CD8-positive, alpha-beta T cell (primary cell): ENCODE measurements at regions of chr10 and their contacts with region 1.

Region 1: GRCh38 chr10:29496341-29497162 is 138.2 kb downstream of the SVIL start:
- DNase-seq: peak; percentile 21 to 73 (median 45)
- ATAC-seq: no peak
- H3K4me3 ChIP-seq: no peak overlapping the region
- H3K4me3 Mint-ChIP-seq: no peak overlapping the region
- H3K27ac ChIP-seq: no peak overlapping the region
- H3K27ac Mint-ChIP-seq: no peak overlapping the region
- H3K4me1 ChIP-seq: no peaks in the 10 kb centered on the region
- H3K4me1 Mint-ChIP-seq: peaks cover 2% of the 10 kb centered on the region
- H3K27me3 ChIP-seq: no peaks in the 10 kb centered on the region
- H3K27me3 Mint-ChIP-seq: no peaks in the 10 kb centered on the region
- CTCF ChIP-seq: peak; percentile 96

Region 2: DNA sequence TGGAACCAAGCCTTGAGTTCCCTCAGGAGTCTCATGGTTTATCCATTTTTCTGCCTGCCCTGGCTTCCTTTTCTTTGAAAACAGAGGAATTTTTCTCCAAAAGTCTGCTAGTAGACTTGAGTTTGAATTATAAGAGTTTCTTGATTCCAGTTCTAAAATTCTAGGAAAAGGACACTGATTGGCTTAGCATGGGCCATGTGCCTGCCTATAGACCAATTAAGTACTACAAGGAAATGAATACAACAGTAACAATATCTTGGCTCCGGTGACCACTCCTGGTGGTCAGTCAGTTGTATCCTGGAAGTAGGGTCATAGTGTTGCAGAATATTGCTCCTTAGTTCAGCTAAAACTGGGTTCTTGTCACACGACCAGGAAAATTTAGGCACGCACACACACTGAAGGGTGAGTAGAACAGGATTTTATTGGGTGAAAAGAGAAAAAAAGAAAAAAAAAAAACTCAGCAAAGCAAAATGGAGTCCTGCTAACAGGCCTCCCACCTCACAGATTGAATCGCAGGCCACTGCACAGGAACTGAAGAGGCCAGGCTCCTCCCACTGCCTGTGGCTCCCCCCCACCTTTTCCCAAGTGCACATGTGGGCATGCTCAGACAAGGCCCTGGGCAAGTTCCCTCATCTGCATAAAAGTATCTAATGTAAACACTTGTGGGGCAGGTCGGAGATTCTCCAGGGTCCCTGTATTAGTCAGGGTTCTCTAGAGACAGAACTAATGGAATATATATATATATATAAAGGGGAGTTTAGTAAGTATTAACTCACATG is 52.6 kb before region 1 on chr10:
- CTCF ChIA-PET with region 1: interaction called, 5 read pairs
- POLR2A ChIA-PET with region 1: no interaction called
- intact Hi-C with region 1: loop called in 1 of 2 experiments (anchors 5 kb)
- DNase-seq: no peak
- ATAC-seq: no peak
- H3K4me3 ChIP-seq: no peak overlapping the region
- H3K4me3 Mint-ChIP-seq: no peak overlapping the region
- H3K27ac ChIP-seq: no peak overlapping the region
- H3K27ac Mint-ChIP-seq: no peak overlapping the region
- H3K4me1 ChIP-seq: no peaks in the 10 kb centered on the region
- H3K4me1 Mint-ChIP-seq: peaks cover 2% of the 10 kb centered on the region
- H3K27me3 ChIP-seq: no peaks in the 10 kb centered on the region
- H3K27me3 Mint-ChIP-seq: no peaks in the 10 kb centered on the region
- CTCF ChIP-seq: no peak

Region 3: GRCh38 chr10:29530109-29530976 is 33.8 kb after region 1 on chr10:
- CTCF ChIA-PET with region 1: no interaction called
- POLR2A ChIA-PET with region 1: no interaction called
- intact Hi-C with region 1: no loop called
- DNase-seq: no peak
- ATAC-seq: no peak
- H3K4me3 ChIP-seq: no peak overlapping the region
- H3K4me3 Mint-ChIP-seq: no peak overlapping the region
- H3K27ac ChIP-seq: no peak overlapping the region
- H3K27ac Mint-ChIP-seq: no peak overlapping the region
- H3K4me1 ChIP-seq: no peaks in the 10 kb centered on the region
- H3K4me1 Mint-ChIP-seq: no peaks in the 10 kb centered on the region
- H3K27me3 ChIP-seq: no peaks in the 10 kb centered on the region
- H3K27me3 Mint-ChIP-seq: no peaks in the 10 kb centered on the region
- CTCF ChIP-seq: no peak